ENCODE measurements at regions of chr11 and their contacts with region 1.

Region 1: DNA sequence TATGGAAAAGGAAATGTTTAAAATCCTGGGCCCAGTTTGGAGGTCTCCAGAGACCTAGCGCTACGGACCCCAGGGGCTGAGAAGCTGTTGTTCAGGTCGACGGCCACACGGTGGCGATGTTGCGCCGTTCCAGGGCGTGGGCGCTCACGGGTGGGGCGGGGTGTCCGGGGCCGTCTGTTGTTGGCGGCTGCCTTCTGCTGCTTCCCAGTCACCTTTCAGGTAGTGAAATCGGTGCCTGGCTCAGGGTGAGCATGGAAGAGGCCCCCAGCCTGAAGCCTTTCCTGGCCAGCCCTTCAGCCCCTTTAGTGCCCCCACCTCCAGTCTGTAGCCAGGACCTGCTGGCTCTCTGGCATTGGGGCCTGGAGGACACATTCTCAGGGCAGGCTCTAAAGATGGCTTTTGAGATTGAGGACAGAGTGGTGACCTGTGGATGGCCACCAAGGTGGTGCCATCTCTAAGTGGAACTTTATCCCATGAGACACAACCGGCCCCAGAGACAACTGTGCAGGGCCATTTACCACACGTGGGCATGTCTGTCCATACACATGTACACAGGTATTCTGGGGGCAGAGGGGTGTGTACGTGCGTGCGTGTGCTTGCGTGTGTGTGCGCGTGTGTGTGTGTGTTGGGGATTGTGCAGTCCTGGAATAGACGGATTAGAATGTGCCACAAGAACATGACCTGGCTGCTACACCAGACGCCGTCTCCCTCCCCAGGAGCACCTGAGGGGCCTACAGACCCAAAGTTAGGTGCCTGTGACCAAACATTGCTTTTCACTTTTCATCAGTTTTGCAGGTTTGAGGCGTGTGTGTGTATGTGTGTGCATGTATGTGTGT is 53.8 kb downstream of the ST14 start:
- DNase-seq: peak; percentile 71
- ATAC-seq: peak; percentile 96
- H3K4me3 Mint-ChIP-seq: no peak overlapping the region
- H3K27ac Mint-ChIP-seq: no peak overlapping the region
- H3K4me1 Mint-ChIP-seq: no peaks in the 10 kb centered on the region
- H3K27me3 Mint-ChIP-seq: peaks cover 3% of the 10 kb centered on the region
- CTCF ChIP-seq: peak; percentile 97

Region 2: DNA sequence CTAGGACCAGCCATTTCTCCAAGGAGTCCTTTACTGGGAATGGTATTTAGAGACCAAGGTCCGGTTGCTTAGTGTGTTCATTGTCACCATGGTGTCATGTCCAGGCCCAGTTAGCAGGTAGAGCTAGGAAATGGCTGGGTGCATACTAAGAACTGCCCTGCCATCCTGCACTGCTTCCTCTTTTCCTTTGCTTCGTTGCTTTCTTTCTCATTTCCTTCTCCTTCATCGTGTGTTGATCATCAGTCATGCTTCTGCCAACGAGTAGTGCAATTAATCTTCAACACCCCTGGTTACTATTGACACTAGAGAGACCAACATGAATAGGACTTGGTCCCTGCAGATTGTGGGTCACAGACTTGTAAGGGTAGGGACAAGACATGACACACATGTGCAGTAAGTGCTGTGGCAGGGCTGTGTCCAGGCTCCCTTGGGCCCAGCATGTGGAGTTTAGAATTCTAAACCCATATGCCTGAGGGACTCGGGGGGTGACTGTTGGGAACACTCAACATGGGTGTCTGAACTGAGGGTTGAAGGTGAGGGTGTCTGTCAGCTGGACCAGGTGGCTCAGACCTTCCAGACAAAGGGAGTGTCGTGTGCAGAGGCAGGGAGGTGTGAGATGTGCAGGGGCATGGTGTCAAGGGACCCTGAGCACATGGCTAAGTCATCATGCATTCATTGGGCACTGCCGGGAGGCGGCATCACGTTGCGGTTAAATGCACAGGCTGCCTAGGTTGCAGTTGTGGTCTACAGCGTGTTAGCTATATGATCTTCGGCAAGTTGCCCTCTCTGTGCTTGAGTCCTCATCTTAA is 11.1 kb before region 1 on chr11:
- CTCF ChIA-PET with region 1: interaction called, 15 read pairs
- POLR2A ChIA-PET with region 1: no interaction called
- intact Hi-C with region 1: no loop called
- DNase-seq: no peak
- ATAC-seq: no peak
- H3K4me3 Mint-ChIP-seq: no peak overlapping the region
- H3K27ac Mint-ChIP-seq: no peak overlapping the region
- H3K4me1 Mint-ChIP-seq: no peaks in the 10 kb centered on the region
- H3K27me3 Mint-ChIP-seq: no peaks in the 10 kb centered on the region
- CTCF ChIP-seq: no peak

Region 3: DNA sequence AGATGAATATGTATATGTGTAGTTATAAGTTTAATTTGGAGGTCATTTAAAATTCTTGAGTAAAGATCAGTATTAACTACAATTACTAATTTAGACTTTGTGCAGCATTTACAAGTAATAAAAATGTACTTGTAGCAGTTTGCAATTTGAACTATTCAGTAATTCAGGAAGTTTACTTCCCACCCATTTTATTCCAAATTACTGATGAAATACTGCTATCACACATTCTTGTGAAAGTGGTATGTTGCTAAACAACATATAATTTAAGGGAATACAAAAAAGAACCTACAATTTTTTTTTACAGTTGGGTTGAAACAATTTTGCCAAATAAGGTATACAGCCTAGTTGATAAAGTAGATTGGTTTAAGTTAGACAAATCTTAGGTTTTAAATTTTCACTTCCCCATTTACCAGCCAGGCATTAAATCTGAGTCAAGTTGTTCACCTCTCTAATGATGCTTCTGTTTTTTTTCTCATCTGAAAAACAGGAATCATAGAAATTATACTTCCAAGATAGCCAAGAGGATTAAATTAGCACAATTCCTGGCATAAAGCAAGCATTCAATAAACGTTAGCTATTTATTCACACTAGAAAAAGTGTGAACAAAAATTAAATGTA is 56.1 kb after region 1 on chr11:
- CTCF ChIA-PET with region 1: no interaction called
- POLR2A ChIA-PET with region 1: no interaction called
- intact Hi-C with region 1: no loop called
- DNase-seq: no peak
- ATAC-seq: no peak
- H3K4me3 Mint-ChIP-seq: no peak overlapping the region
- H3K27ac Mint-ChIP-seq: no peak overlapping the region
- H3K4me1 Mint-ChIP-seq: peaks cover 16% of the 10 kb centered on the region
- H3K27me3 Mint-ChIP-seq: no peaks in the 10 kb centered on the region
- CTCF ChIP-seq: no peak

Region 4: GRCh38 chr11:130370845-130371590 is 157.7 kb after region 1 on chr11:
- CTCF ChIA-PET with region 1: interaction called, 9 read pairs
- POLR2A ChIA-PET with region 1: no interaction called
- intact Hi-C with region 1: loop called (anchors 5 kb)
- DNase-seq: no peak
- ATAC-seq: peak; percentile 39
- H3K4me3 Mint-ChIP-seq: no peak overlapping the region
- H3K27ac Mint-ChIP-seq: no peak overlapping the region
- H3K4me1 Mint-ChIP-seq: no peaks in the 10 kb centered on the region
- H3K27me3 Mint-ChIP-seq: no peaks in the 10 kb centered on the region
- CTCF ChIP-seq: no peak

Region 5: DNA sequence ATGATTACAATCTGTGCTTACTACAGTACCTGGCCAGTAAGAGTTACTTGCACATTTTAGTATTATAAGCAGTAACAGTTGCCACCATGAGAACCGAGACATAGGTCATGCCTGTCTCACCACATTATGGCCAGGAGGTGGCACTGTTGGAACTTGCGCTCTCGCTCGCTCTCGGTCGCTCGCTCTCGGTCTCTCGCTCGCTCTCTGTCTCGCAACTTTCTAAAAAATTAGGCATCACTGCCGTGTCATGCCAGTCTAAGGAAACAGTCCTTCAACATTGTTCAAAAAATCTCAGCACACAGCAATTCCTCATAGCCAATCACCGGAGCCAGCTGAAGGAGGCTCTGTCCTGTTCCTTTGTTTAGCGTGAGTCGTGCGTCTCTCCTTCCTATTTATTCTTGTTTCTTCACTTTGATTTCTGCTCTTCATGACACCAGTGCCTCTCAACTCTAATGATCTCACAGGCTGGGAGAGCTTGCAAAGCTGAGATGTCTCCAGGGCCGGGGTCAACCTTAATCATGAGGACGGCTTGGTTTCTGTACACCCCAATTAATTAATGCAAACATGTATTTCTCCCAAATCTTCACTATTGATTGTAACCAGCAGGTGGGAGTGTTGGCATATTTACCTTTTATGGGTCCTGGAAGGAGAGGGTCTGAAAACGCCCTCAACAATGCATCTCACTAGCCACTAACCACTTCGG is 221.3 kb after region 1 on chr11:
- CTCF ChIA-PET with region 1: interaction called, 9 read pairs
- POLR2A ChIA-PET with region 1: no interaction called
- intact Hi-C with region 1: loop called (anchors 5 kb)
- DNase-seq: peak; percentile 77
- ATAC-seq: peak; percentile 83
- H3K4me3 Mint-ChIP-seq: no peak overlapping the region
- H3K27ac Mint-ChIP-seq: no peak overlapping the region
- H3K4me1 Mint-ChIP-seq: peaks cover 10% of the 10 kb centered on the region
- H3K27me3 Mint-ChIP-seq: peaks cover 16% of the 10 kb centered on the region
- CTCF ChIP-seq: peak; percentile 84

Region 6: DNA sequence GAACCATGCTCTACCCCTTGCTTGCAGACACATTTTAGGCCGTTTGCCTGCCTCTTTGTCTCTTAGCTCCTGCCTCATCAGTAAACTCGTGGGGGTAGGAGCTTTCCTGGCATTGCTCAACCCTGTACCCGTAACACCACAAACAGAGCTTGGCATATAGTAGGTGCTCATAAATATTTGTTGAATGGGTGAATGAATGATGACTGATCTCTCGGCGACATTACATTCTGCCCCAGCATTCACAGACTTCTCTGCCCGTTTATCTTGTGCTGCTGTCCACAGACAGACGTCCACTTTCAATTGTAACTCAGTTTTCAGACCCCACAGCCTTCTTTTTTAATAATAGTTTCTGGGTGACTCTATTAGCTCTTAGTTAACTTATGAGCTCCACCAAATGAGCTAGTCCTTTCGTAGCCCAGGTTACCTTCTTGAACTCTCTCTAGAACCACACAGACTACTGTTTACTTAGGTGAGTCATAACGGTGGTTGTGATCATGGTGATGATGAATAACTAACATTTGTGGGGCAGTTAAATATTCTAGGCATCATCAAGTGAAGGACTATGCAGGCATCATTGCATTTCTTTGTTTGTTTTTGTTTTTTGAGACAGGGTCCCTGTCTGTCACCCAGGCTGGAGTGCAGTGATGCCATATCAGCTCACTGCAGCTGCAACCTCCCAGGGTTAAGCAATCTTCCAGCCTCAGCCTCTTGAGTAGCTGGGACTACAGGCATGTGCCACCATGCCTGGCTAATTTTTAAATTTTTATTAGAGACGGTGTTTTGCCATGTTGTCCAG is 423.6 kb after region 1 on chr11:
- CTCF ChIA-PET with region 1: no interaction called
- POLR2A ChIA-PET with region 1: no interaction called
- intact Hi-C with region 1: no loop called
- DNase-seq: no peak
- ATAC-seq: no peak
- H3K4me3 Mint-ChIP-seq: no peak overlapping the region
- H3K27ac Mint-ChIP-seq: no peak overlapping the region
- H3K4me1 Mint-ChIP-seq: no peaks in the 10 kb centered on the region
- H3K27me3 Mint-ChIP-seq: peaks cover 2% of the 10 kb centered on the region
- CTCF ChIP-seq: no peak

Measured in activated CD8-positive, alpha-beta T cell treated with anti-CD3 and anti-CD28 coated beads for 36 hours (primary cell).